ENCODE measurements at regions of chr15 and their contacts with region 1.

Region 1: DNA sequence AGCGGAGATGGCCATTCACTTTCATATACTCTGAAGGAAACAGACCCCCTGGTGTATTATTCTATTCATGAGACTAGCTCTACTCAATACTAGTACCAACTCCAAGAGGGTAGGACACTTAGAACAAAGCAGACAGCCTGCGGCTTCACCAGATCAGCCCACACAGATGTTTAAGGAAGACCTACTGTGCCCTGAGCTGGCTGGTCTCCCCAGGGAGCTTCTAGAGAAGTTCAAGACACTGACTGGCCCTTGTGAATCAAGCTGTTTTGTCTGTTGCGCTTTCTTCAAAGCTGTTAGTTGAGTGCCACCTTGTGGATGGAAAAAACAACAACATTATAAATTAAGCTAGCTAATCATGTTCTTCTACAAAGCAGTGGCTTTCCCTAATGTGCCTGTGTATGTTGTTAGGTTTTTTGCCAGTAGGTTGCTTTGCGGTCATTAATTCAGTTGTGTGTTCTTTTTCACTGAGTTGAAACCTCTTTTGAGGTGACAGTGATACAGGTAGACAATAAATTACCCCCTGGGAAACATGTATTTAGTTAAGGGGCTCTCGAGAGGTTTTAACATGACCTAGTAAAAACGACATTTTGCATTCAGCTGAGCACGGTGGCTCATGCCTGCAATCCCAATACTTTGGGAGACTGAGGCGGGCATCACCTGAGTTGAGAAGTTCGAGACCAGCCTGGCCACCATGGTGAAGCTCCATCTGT is 64.2 kb upstream of the MYZAP start:
- DNase-seq: peak; percentile 50 to 63
- H3K4me3 ChIP-seq: no peak overlapping the region
- H3K27ac ChIP-seq: no peak overlapping the region
- H3K4me1 ChIP-seq: peaks cover 0 to 5% (median 0%) of the 10 kb centered on the region in 4 experiments; a peak in 1 of 7 replicates
- H3K27me3 ChIP-seq: no peaks in the 10 kb centered on the region
- CTCF ChIP-seq: peak in 2 of 3 experiments; percentile 62 to 67; a peak in 3 of 4 replicates
- EP300 ChIP-seq: no peak
- POLR2A ChIP-seq: no peak
- RAD21 ChIP-seq: peak; percentile 88 to 89

Region 2: GRCh38 chr15:57333487-57333886 is 194.1 kb before region 1 on chr15:
- CTCF ChIA-PET with region 1: interaction called, 302 read pairs
- POLR2A ChIA-PET with region 1: interaction called, 3 read pairs
- DNase-seq: no peak
- H3K4me3 ChIP-seq: no peak overlapping the region
- H3K27ac ChIP-seq: no peak overlapping the region
- H3K4me1 ChIP-seq: peaks cover 0 to 4% (median 0%) of the 10 kb centered on the region in 4 experiments; a peak in 1 of 7 replicates
- H3K27me3 ChIP-seq: no peaks in the 10 kb centered on the region
- CTCF ChIP-seq: no peak
- EP300 ChIP-seq: no peak
- POLR2A ChIP-seq: no peak
- RAD21 ChIP-seq: no peak

Region 3: GRCh38 chr15:57364282-57365007 is 163.1 kb before region 1 on chr15:
- CTCF ChIA-PET with region 1: interaction called, 17 read pairs
- POLR2A ChIA-PET with region 1: no interaction called
- DNase-seq: no peak
- H3K4me3 ChIP-seq: no peak overlapping the region
- H3K27ac ChIP-seq: no peak overlapping the region
- H3K4me1 ChIP-seq: peaks cover 0 to 7% (median 4%) of the 10 kb centered on the region in 4 experiments; a peak in 5 of 7 replicates
- H3K27me3 ChIP-seq: no peaks in the 10 kb centered on the region
- CTCF ChIP-seq: peak; percentile 36 to 54 (median 39); a peak in 3 of 4 replicates
- EP300 ChIP-seq: no peak
- POLR2A ChIP-seq: no peak
- RAD21 ChIP-seq: peak in 1 of 2 experiments; percentile 52; a peak in 2 of 4 replicates

Region 4: DNA sequence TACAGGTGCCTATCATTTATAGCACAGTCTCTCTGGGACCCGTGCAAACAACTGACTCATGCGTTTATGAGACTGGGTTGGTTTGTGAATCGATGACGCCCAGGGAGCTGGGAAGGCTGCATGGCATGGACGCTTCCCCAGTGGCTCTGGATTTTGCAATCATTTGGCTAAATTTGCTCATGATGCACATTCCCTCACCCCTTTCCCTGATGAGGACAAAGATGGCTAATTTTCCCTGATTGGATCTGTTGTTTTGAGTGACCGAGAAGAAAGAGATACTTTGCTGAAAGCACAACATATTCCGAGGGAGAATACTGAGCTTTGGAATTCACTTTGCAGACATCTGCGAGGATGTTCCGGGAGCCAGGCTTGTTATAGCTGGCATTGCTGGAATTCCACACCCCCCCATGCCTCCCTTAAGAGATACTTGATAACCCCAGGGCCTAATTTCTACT is 100.1 kb before region 1 on chr15:
- CTCF ChIA-PET with region 1: interaction called, 14 read pairs
- POLR2A ChIA-PET with region 1: no interaction called
- DNase-seq: peak in 1 of 2 experiments; percentile 23
- H3K4me3 ChIP-seq: no peak overlapping the region
- H3K27ac ChIP-seq: no peak overlapping the region; the same call in 1 of the 2 replicates
- H3K4me1 ChIP-seq: peaks cover 9 to 27% (median 16%) of the 10 kb centered on the region in 4 experiments
- H3K27me3 ChIP-seq: no peaks in the 10 kb centered on the region
- CTCF ChIP-seq: no peak
- EP300 ChIP-seq: no peak
- POLR2A ChIP-seq: no peak
- RAD21 ChIP-seq: no peak

Region 5: DNA sequence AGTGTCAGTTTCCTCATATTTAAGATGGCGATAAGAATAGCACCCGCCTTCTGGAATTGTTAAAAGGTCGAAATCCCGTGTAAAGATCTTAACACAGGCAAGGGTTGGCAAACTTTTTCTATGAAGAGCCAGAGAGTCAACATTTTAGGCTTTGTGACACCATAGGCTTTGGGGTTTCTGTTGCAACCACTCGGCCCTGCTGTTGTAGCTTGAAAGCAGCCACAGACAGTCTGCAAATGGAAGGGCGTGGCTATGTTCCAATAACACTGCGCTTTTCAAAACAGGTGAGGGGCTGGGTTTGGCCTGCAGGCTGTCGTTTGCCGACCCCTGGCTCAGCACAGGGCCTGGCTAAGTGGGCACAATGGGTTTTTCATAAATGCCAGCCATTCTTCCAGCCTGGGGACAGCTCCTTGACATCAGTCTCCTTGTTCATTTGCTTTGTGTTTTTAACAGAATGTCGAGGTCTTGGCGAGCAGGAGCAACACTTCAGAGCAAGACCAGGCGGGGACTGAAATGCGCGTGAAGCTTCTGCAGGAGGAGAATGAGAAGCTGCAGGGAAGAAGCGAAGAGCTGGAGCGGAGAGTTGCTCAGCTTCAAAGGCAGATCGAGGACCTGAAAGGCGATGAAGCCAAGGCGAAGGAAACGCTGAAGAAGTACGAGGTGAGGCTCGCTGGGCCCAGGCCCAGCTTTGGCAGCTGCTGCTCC is 11.1 kb before region 1 on chr15:
- CTCF ChIA-PET with region 1: interaction called, 32 read pairs
- POLR2A ChIA-PET with region 1: no interaction called
- DNase-seq: no peak
- H3K4me3 ChIP-seq: no peak overlapping the region
- H3K27ac ChIP-seq: no peak overlapping the region
- H3K4me1 ChIP-seq: no peaks in the 10 kb centered on the region
- H3K27me3 ChIP-seq: no peaks in the 10 kb centered on the region
- CTCF ChIP-seq: no peak
- EP300 ChIP-seq: no peak
- POLR2A ChIP-seq: no peak
- RAD21 ChIP-seq: no peak

Region 6: GRCh38 chr15:57551717-57552677 is 24.5 kb after region 1 on chr15:
- CTCF ChIA-PET with region 1: interaction called, 108 read pairs
- POLR2A ChIA-PET with region 1: no interaction called
- DNase-seq: peak in 1 of 2 experiments; percentile 51
- H3K4me3 ChIP-seq: no peak overlapping the region
- H3K27ac ChIP-seq: peak overlapping the region; percentile 31; the same call in 1 of the 2 replicates
- H3K4me1 ChIP-seq: peaks cover 0 to 13% (median 5%) of the 10 kb centered on the region in 4 experiments; a peak in 6 of 7 replicates
- H3K27me3 ChIP-seq: no peaks in the 10 kb centered on the region
- CTCF ChIP-seq: no peak
- EP300 ChIP-seq: no peak
- POLR2A ChIP-seq: peak in 1 of 2 experiments; percentile 21; a peak in 1 of 3 replicates
- RAD21 ChIP-seq: no peak